HepG2 (cell line): ENCODE measurements at regions of chr11 and their contacts with region 1.

Region 1: DNA sequence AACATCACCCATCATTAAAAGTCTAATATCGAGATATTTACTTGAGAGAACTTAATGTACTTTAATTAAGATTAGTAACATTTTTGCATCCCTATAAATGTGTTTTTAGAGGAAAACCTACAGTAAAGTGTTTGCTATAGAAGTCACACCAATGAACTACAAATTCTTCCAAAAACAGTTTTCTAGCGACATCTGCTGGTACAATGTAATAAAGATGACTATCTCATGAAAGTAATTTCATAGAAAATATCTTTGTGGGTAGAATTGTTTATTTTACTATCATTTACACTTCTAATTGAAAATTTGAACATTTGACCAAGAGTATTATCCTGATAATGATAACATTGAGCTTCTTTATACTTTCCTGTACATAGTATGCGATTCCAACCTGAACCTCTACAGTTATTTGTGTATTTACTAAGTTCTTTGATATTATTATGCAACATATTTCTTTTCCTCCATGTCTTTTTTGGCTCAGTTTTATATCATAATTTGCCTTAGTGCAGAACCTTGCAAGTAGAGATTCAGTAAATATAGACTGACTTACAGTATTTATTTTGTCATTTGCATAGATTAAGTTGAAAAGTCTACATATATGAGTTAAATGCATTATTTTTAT is 252.7 kb downstream of the TMEM135 start:
- DNase-seq: peak; percentile 59
- ATAC-seq: no peak; the same call in 2 of the 3 replicates
- H3K4me3 ChIP-seq: no peak overlapping the region
- H3K27ac ChIP-seq: no peak overlapping the region
- H3K4me1 ChIP-seq: no peaks in the 10 kb centered on the region
- H3K27me3 ChIP-seq: no peaks in the 10 kb centered on the region
- CTCF ChIP-seq: peak; percentile 58
- EP300 ChIP-seq: no peak
- POLR2A ChIP-seq: no peak
- RAD21 ChIP-seq: peak; percentile 41; the same call in 1 of the 2 replicates

Region 2: DNA sequence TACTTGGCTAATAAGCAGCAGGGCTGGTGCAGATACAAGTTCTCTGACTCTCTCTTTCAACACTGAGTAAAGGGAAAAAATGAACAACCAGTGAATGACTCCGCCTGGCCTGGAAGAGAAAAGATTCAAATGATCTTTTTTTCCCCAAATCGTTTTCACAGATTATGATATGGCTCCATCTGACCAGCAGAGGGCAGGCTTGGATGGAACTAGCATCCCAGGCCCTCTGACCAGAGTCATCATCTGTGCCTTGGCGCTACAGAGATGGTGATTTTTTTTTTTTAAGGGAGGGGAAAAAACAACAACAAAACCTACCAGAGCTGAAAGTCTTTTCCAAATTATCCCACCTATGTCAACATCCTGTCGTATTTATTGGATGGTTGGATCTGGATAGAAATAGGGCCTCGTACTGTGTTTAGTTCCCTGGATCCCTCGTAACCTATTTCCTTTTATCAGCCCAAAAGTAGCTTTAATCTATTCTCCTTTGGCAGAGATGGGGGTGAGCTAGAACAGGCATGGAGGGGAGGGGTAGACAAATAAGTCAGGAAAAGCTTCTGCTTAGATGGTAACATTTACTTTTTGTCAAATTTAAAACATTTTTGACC is 420.3 kb before region 1 on chr11:
- CTCF ChIA-PET with region 1: interaction called, 4 read pairs
- POLR2A ChIA-PET with region 1: no interaction called
- in situ Hi-C with region 1: no loop called
- intact Hi-C with region 1: loop called (anchors 2 kb)
- DNase-seq: peak; percentile 29
- ATAC-seq: peak; percentile 94
- H3K4me3 ChIP-seq: no peak overlapping the region
- H3K27ac ChIP-seq: no peak overlapping the region
- H3K4me1 ChIP-seq: no peaks in the 10 kb centered on the region
- H3K27me3 ChIP-seq: peaks cover 0 to 5% of the 10 kb centered on the region in 2 experiments; a peak in 3 of 5 replicates
- CTCF ChIP-seq: peak; percentile 82
- EP300 ChIP-seq: no peak
- POLR2A ChIP-seq: no peak
- RAD21 ChIP-seq: peak; percentile 46; the same call in 1 of the 2 replicates

Region 3: DNA sequence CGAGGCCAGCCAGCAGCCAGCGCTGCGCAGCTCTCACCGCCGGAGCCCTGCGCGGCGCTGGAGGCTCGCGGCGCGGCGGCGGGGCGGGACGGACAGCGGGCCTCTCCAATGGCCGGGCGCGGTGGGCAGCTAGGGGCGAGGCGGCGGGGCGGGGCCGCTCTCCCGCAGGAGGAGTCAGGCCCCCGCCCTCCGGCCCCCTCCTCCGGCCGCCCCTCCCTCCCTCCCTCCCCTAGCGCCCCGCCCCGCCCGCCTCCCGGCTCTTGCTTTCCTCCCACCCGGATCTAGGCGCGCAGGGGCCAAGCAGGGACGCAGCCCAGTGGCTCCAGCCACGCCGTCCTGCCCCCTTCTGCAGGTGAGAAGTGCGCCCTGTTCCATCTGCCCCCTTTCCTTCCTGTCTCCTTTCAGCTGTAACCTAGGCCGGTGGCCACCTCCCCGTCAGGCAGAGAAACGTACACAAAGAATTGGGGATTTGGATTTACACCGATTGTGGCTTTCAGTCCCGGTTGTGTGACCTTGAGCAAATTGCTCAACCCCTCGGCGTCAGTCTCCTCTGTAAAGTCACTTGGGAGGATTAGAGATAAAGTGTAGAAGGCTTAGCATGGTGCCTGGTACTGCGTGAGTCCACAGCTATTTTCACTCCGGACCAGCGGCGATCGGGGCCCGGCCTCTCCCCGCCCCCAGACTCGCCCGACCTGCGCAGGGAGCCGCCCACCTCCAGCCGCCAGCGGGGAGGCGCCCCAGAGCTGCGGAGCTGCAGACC is 334.9 kb before region 1 on chr11 and contains the start of gene FZD4:
- CTCF ChIA-PET with region 1: no interaction called
- POLR2A ChIA-PET with region 1: interaction called, 3 read pairs
- in situ Hi-C with region 1: no loop called
- intact Hi-C with region 1: loop called (anchors 5 kb)
- DNase-seq: peak; percentile 88
- ATAC-seq: peak; percentile 92
- H3K4me3 ChIP-seq: peak within 1 kb of the TSS; percentile 79 to 87 (median 82)
- H3K27ac ChIP-seq: peak within 1 kb of the TSS; percentile 96
- H3K4me1 ChIP-seq: peaks cover 50% of the 10 kb centered on the region
- H3K27me3 ChIP-seq: no peaks in the 10 kb centered on the region; a peak in 1 of 5 replicates
- CTCF ChIP-seq: peak; percentile 71
- EP300 ChIP-seq: peak in 1 of 2 experiments; percentile 23; a peak in 1 of 4 replicates
- POLR2A ChIP-seq: peak; percentile 67 to 68
- RAD21 ChIP-seq: peak; percentile 78; the same call in 1 of the 2 replicates
- total RNA-seq, gene FZD4: 34.7 and 46.5 TPM in 2 replicates

Region 4: DNA sequence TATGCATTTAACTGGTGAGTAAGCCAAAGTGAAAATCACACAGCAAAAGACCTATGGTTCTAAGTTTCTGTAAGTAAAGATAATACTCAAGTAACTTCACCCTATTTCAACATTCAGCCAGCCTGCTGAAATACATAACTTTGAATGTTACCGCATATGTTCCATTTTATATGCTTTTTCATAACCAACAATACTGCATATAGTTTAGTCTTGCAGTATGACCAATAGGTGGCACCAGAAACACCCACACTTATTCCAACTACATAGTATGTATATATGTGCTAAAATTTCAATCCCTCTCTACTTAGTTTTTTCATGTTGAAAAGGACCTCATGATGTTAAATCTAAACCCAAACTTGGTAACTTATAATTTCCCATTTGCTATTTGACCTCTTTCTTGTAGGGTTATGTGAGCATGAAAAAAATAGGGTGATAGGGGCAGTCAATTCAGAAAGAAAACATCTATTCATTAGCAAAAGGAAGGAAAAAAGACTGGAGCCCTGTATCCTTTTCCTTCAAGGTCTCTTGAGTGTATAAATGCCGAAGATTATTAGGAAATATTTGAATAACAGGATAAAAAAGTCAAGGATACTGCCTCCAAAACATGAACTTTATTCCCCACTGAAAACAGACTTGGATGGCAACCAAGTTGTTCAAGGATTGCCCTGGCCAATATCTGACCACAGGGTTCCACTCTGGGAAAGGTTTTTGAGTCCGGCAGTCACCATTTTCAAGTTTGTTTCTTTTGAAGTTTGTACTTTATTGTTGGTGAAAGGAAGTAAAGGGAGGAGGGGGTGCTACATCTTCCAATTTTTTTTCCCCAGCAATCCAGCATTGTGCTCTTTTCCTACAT is 311.4 kb before region 1 on chr11:
- CTCF ChIA-PET with region 1: interaction called, 13 read pairs
- POLR2A ChIA-PET with region 1: no interaction called
- in situ Hi-C with region 1: no loop called
- intact Hi-C with region 1: no loop called
- DNase-seq: no peak
- ATAC-seq: peak; percentile 77
- H3K4me3 ChIP-seq: no peak overlapping the region
- H3K27ac ChIP-seq: peak overlapping the region; percentile 28
- H3K4me1 ChIP-seq: peaks cover 59% of the 10 kb centered on the region
- H3K27me3 ChIP-seq: no peaks in the 10 kb centered on the region
- CTCF ChIP-seq: peak; percentile 58
- EP300 ChIP-seq: no peak
- POLR2A ChIP-seq: no peak
- RAD21 ChIP-seq: peak; percentile 37; the same call in 1 of the 2 replicates

Region 5: DNA sequence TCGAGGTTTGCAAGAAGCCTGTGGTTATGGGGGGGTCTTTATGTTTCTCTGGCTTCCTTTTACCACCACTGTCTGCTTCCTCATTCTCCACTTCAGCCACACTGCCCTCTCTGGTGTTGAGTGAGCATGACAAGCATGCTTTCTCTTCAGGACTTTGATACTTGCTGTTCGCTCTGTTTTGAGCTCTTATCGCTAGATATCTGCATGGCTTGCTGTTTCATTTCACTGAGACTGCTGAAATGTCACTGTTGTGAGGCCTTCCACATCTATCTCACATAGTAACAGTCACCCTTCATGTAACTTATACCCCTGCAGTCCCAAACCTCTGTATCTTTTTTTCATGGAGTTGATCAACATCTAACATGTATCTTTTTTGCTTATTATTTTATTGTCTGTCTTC is 192.8 kb before region 1 on chr11:
- CTCF ChIA-PET with region 1: interaction called, 7 read pairs
- POLR2A ChIA-PET with region 1: no interaction called
- in situ Hi-C with region 1: loop called (anchors 25 kb)
- intact Hi-C with region 1: loop called (anchors 1 kb)
- DNase-seq: peak; percentile 87
- ATAC-seq: peak; percentile 99
- H3K4me3 ChIP-seq: no peak overlapping the region
- H3K27ac ChIP-seq: peak overlapping the region; percentile 52
- H3K4me1 ChIP-seq: peaks cover 13% of the 10 kb centered on the region
- H3K27me3 ChIP-seq: no peaks in the 10 kb centered on the region; a peak in 1 of 5 replicates
- CTCF ChIP-seq: peak; percentile 85
- EP300 ChIP-seq: no peak
- POLR2A ChIP-seq: no peak
- RAD21 ChIP-seq: 0 out of 2 replicates have a peak, but pooled peaks have one; percentile 28

Region 6: GRCh38 chr11:87265132-87265531 is 25.3 kb before region 1 on chr11:
- CTCF ChIA-PET with region 1: no interaction called
- POLR2A ChIA-PET with region 1: no interaction called
- in situ Hi-C with region 1: no loop called
- intact Hi-C with region 1: no loop called
- DNase-seq: no peak
- ATAC-seq: no peak
- H3K4me3 ChIP-seq: no peak overlapping the region
- H3K27ac ChIP-seq: no peak overlapping the region
- H3K4me1 ChIP-seq: no peaks in the 10 kb centered on the region
- H3K27me3 ChIP-seq: no peaks in the 10 kb centered on the region
- CTCF ChIP-seq: no peak
- EP300 ChIP-seq: no peak
- POLR2A ChIP-seq: no peak
- RAD21 ChIP-seq: no peak

Region 7: GRCh38 chr11:87437844-87438223 is 147.4 kb after region 1 on chr11:
- CTCF ChIA-PET with region 1: no interaction called
- POLR2A ChIA-PET with region 1: no interaction called
- in situ Hi-C with region 1: no loop called
- intact Hi-C with region 1: no loop called
- DNase-seq: no peak
- ATAC-seq: no peak
- H3K4me3 ChIP-seq: no peak overlapping the region
- H3K27ac ChIP-seq: no peak overlapping the region
- H3K4me1 ChIP-seq: peaks cover 7% of the 10 kb centered on the region; the same call in 1 of the 2 replicates
- H3K27me3 ChIP-seq: no peaks in the 10 kb centered on the region; a peak in 1 of 5 replicates
- CTCF ChIP-seq: no peak
- EP300 ChIP-seq: no peak
- POLR2A ChIP-seq: no peak
- RAD21 ChIP-seq: no peak